ENCODE measurements at regions of chr10 and their contacts with region 1.

Region 1: DNA sequence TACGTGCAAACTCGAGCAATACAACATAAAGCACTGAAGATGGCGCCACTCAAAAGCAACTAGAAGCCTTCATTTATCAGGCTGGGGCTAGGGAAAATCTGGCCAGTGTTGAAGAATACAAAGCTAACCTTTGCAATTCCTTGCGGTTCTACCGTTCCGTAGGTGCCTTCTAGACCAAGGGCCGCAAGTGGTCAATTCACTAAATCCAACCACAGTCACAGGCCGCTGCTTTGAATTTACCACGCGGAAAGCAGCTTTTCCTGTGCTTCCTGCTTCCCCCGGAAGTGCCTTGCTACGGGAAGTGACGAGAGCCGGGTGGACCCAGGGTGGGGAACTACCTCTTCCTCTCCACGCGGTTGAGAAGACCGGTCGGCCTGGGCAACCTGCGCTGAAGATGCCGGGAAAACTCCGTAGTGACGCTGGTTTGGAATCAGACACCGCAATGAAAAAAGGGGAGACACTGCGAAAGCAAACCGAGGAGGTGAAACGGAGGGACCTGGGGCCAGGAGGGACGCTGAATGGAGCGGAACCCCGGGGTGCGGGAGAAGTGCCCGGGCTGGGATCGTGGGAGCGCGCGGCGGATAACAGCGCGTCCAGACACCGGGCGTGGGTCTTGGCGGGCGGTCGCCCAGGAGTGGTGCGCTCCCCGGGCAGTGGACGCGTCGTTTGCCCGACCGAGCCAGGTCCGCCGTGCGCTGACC is at the start of gene DDX21:
- DNase-seq: peak; percentile 95
- ATAC-seq: peak; percentile 84
- H3K4me3 Mint-ChIP-seq: peak within 1 kb of the TSS; percentile 93
- H3K27ac Mint-ChIP-seq: peak within 1 kb of the TSS; percentile 98
- H3K4me1 Mint-ChIP-seq: peaks cover 31% of the 10 kb centered on the region
- H3K27me3 Mint-ChIP-seq: no peaks in the 10 kb centered on the region
- total RNA-seq, gene DDX21: 80.4 to 143 TPM

Region 2: GRCh38 chr10:68938119-68938518 is 17.9 kb before region 1 on chr10:
- CTCF ChIA-PET with region 1: interaction called, 13 read pairs
- DNase-seq: no peak
- ATAC-seq: no peak
- H3K4me3 Mint-ChIP-seq: no peak overlapping the region
- H3K27ac Mint-ChIP-seq: peak overlapping the region; percentile 1
- H3K4me1 Mint-ChIP-seq: peaks cover 9% of the 10 kb centered on the region
- H3K27me3 Mint-ChIP-seq: no peaks in the 10 kb centered on the region

Region 3: DNA sequence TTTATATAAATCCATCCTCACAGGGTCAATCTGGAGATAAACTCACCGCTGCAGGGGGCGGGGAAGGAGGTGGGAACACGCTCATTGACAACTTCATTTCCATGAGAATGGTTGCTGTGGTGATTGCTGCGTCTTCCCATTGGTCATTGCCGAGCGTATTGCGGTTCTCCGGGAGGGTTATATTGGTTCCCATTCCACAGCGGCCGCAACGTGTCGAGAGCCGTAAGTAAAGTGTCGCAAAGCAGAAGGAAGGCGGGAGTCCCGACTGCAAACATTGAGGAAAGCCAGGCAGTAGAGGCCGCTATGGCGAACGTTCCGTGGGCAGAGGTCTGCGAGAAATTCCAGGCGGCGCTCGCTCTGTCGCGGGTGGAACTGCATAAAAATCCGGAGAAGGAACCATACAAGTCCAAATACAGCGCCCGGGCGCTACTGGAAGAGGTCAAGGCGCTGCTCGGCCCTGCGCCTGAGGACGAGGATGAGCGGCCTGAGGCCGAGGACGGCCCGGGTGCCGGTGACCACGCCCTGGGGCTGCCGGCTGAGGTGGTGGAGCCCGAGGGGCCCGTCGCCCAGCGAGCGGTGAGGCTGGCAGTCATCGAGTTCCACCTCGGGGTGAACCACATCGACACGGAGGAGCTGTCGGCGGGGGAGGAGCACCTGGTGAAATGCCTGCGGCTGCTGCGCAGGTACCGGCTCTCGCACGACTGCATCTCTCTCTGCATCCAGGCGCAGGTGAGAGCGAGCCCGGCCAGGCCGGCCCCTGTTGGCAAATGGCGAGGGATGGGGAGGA is 32.7 kb after region 1 on chr10 and contains the start of gene KIFBP:
- CTCF ChIA-PET with region 1: interaction called, 21 read pairs
- DNase-seq: peak; percentile 93
- ATAC-seq: peak; percentile 89
- H3K4me3 Mint-ChIP-seq: peak within 1 kb of the TSS; percentile 96
- H3K27ac Mint-ChIP-seq: peak within 1 kb of the TSS; percentile 90
- H3K4me1 Mint-ChIP-seq: peaks cover 56% of the 10 kb centered on the region
- H3K27me3 Mint-ChIP-seq: no peaks in the 10 kb centered on the region
- total RNA-seq, gene KIFBP: 16.0 to 23.1 TPM

Region 4: GRCh38 chr10:69014171-69014570 is 58.2 kb after region 1 on chr10:
- CTCF ChIA-PET with region 1: no interaction called
- DNase-seq: no peak
- ATAC-seq: no peak
- H3K4me3 Mint-ChIP-seq: no peak overlapping the region
- H3K27ac Mint-ChIP-seq: no peak overlapping the region
- H3K4me1 Mint-ChIP-seq: peaks cover 12% of the 10 kb centered on the region
- H3K27me3 Mint-ChIP-seq: no peaks in the 10 kb centered on the region

Region 5: GRCh38 chr10:69092959-69093850 is 137.2 kb after region 1 on chr10:
- CTCF ChIA-PET with region 1: interaction called, 26 read pairs
- DNase-seq: peak; percentile 93
- ATAC-seq: peak; percentile 32
- H3K4me3 Mint-ChIP-seq: peak overlapping the region; percentile 39
- H3K27ac Mint-ChIP-seq: peak overlapping the region; percentile 99
- H3K4me1 Mint-ChIP-seq: peaks cover 68% of the 10 kb centered on the region
- H3K27me3 Mint-ChIP-seq: no peaks in the 10 kb centered on the region

Measured in activated CD8-positive, alpha-beta memory T cell treated with anti-CD3 and anti-CD28 coated beads, Interleukin-2, amount 10 ng/mL, durations not matched to agents 7 days and 5 days (primary cell).